HepG2 (cell line): ENCODE measurements at regions of chr5 and their contacts with region 1.

Region 1: DNA sequence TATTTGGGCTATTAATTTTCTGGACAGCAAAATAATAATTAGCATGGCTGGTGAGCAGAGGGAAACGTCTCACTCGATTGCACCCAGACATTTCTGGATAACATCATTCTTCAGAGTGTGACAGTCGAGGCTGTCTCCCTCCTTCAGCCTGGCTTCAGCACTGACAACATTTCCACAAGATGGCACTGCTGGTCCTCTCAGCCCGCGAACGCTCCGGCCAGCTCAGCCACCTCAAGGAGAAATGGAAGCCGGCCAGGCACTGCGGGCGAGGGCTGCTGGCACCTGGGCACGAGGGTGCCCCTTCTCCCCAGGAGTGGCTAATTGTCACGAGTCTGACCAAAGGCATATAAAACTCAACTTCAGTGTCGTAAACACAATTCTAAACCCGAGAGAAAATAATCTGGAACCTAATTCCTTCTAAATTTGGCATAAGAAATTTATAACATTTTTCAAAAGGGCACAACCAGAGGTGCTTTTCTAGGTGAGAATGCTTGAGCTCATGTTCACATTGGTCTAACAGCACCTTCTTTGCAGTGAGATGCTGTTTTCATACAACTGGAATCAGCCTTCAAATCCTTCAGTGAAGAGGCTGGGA is 65.9 kb downstream of the DAP start:
- DNase-seq: peak; percentile 16
- ATAC-seq: peak; percentile 85
- H3K4me3 ChIP-seq: no peak overlapping the region
- H3K27ac ChIP-seq: no peak overlapping the region
- H3K4me1 ChIP-seq: no peaks in the 10 kb centered on the region
- H3K27me3 ChIP-seq: no peaks in the 10 kb centered on the region
- CTCF ChIP-seq: peak; percentile 78
- EP300 ChIP-seq: no peak
- POLR2A ChIP-seq: no peak
- RAD21 ChIP-seq: no peak

Region 2: DNA sequence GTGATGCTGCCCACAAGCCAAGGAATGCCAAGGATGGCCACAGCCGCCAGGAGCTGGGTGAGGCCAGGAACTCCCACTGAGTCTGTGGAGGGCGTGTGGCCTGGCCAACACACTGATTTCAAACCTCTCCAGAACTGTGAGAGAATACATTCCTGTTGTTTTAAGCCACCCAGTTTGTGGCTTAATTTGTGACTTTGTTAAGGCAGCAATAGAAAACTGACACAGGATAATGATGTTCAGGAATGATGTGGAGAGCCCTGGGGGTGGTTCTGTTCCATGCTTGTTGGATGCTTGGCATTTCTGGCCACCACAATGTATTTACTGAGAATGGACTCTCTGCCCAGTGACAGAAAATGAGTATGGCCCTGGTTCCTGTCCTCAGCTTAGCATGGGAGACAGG is 16.9 kb before region 1 on chr5:
- CTCF ChIA-PET with region 1: no interaction called
- POLR2A ChIA-PET with region 1: no interaction called
- in situ Hi-C with region 1: no loop called
- intact Hi-C with region 1: no loop called
- DNase-seq: no peak
- ATAC-seq: no peak
- H3K4me3 ChIP-seq: no peak overlapping the region
- H3K27ac ChIP-seq: no peak overlapping the region
- H3K4me1 ChIP-seq: no peaks in the 10 kb centered on the region
- H3K27me3 ChIP-seq: no peaks in the 10 kb centered on the region
- CTCF ChIP-seq: no peak
- EP300 ChIP-seq: no peak
- POLR2A ChIP-seq: no peak
- RAD21 ChIP-seq: no peak

Region 3: DNA sequence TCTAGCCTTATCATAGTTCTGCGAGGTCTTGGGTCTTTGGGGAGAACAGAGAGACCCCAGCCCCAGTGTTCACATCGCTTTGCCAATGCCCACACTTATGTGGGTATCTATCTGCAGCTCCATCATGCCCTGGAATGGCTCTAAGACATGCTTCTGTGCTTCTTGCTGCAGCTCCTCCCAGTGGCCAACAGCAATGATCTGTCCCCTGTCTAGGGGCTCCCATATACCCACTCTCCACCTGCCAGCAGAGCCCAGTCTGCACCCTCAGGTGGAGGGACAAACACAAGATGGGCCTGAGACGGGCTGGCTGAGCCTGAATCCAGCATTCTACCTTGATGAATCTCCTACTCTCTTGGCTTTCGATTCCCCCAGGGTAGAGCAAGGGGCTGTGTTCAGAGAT is 80.5 kb after region 1 on chr5:
- CTCF ChIA-PET with region 1: no interaction called
- POLR2A ChIA-PET with region 1: no interaction called
- in situ Hi-C with region 1: no loop called
- intact Hi-C with region 1: loop called (anchors 2 kb)
- DNase-seq: no peak
- ATAC-seq: peak; percentile 93
- H3K4me3 ChIP-seq: no peak overlapping the region
- H3K27ac ChIP-seq: no peak overlapping the region
- H3K4me1 ChIP-seq: no peaks in the 10 kb centered on the region
- H3K27me3 ChIP-seq: no peaks in the 10 kb centered on the region
- CTCF ChIP-seq: peak; percentile 29
- EP300 ChIP-seq: no peak
- POLR2A ChIP-seq: no peak
- RAD21 ChIP-seq: no peak